Right lobe of liver (tissue), 6 donors: ENCODE measurements at regions of chr17 and their contacts with region 1.

Region 1: GRCh38 chr17:6421700-6422604 is 13.0 kb downstream of the AIPL1 start:
- DNase-seq: peak; percentile 81 to 83 (median 81)
- ATAC-seq: peak; percentile 89 to 97 (median 93)
- H3K4me3 ChIP-seq: no peak overlapping the region
- H3K27ac ChIP-seq: no peak overlapping the region
- H3K4me1 ChIP-seq: no peaks in the 10 kb centered on the region
- H3K27me3 ChIP-seq: no peaks in the 10 kb centered on the region
- CTCF ChIP-seq: peak; percentile 80 to 83 (median 83)
- POLR2A ChIP-seq: no peak

Region 2: GRCh38 chr17:5598457-5598856 is 823.5 kb before region 1 on chr17:
- intact Hi-C with region 1: loop called in 1 of 2 experiments (anchors 5 kb)
- DNase-seq: no peak
- ATAC-seq: no peak
- H3K4me3 ChIP-seq: no peak overlapping the region
- H3K27ac ChIP-seq: no peak overlapping the region
- H3K4me1 ChIP-seq: no peaks in the 10 kb centered on the region
- H3K27me3 ChIP-seq: no peaks in the 10 kb centered on the region
- CTCF ChIP-seq: no peak
- POLR2A ChIP-seq: no peak